B cell (primary cell): ENCODE measurements at regions of chr2 and their contacts with region 1.

Region 1: GRCh38 chr2:224561234-224562005 is 23.7 kb downstream of the CUL3 start:
- DNase-seq: no peak
- ATAC-seq: no peak
- H3K4me3 ChIP-seq: peak overlapping the region in 1 of 5 experiments; percentile 3
- H3K4me3 Mint-ChIP-seq: no peak overlapping the region
- H3K27ac ChIP-seq: peak overlapping the region in 1 of 2 donors; percentile 1
- H3K27ac Mint-ChIP-seq: no peak overlapping the region
- H3K4me1 ChIP-seq: peaks cover 35 to 41% of the 10 kb centered on the region in 2 donors
- H3K4me1 Mint-ChIP-seq: peaks cover 32% of the 10 kb centered on the region
- H3K27me3 ChIP-seq: no peaks in the 10 kb centered on the region
- H3K27me3 Mint-ChIP-seq: no peaks in the 10 kb centered on the region
- CTCF ChIP-seq: no peak

Region 2: DNA sequence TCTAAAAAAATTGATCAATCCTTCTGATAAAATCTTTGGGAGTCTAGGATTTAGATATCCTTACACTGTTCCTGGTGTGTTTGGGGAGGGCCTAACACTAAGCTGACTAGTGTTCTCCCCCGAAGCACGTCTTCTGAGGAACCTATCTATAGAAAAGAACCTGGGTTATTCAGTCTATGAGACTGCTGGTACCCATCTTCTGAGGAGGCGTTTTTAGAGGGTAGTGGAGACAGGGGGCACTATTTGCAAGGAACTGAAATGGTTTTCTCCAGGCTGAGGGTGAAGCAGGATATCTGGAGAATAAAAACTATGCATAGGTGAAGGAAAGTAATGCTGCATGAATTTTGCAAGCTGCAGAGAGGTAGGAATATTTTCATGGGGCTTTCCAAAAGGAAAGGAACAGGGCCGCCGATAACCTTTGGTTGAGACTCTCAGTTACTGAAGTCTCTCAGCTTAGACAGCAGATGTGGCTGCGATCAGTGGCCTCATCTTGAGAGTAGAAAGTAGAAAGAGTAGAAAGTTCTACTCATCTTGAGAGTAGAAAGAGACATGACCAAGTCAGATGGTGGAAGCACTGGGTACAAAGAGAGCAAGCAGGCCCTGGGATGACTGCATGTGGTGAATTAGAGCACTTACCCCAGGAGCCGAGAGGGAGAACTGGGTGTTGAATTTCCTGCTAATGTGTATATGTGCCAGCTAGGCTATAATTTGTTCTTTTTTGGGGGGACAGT is 1541.3 kb before region 1 on chr2:
- CTCF ChIA-PET with region 1: no interaction called
- POLR2A ChIA-PET with region 1: no interaction called
- intact Hi-C with region 1: no loop called
- DNase-seq: no peak
- ATAC-seq: no peak
- H3K4me3 ChIP-seq: no peak overlapping the region
- H3K4me3 Mint-ChIP-seq: no peak overlapping the region
- H3K27ac ChIP-seq: no peak overlapping the region
- H3K27ac Mint-ChIP-seq: no peak overlapping the region
- H3K4me1 ChIP-seq: no peaks in the 10 kb centered on the region
- H3K4me1 Mint-ChIP-seq: no peaks in the 10 kb centered on the region
- H3K27me3 ChIP-seq: no peaks in the 10 kb centered on the region
- H3K27me3 Mint-ChIP-seq: no peaks in the 10 kb centered on the region
- CTCF ChIP-seq: no peak

Region 3: GRCh38 chr2:224545884-224546644 is 15.4 kb before region 1 on chr2:
- CTCF ChIA-PET with region 1: interaction called, 5 read pairs
- POLR2A ChIA-PET with region 1: no interaction called
- intact Hi-C with region 1: loop called (anchors 2 kb)
- DNase-seq: no peak
- ATAC-seq: no peak
- H3K4me3 ChIP-seq: no peak overlapping the region
- H3K4me3 Mint-ChIP-seq: peak overlapping the region; percentile 33
- H3K27ac ChIP-seq: peak overlapping the region in 1 of 2 donors; percentile 50
- H3K27ac Mint-ChIP-seq: peak overlapping the region; percentile 46
- H3K4me1 ChIP-seq: peaks cover 12 to 21% of the 10 kb centered on the region in 2 donors
- H3K4me1 Mint-ChIP-seq: peaks cover 54% of the 10 kb centered on the region
- H3K27me3 ChIP-seq: no peaks in the 10 kb centered on the region
- H3K27me3 Mint-ChIP-seq: no peaks in the 10 kb centered on the region
- CTCF ChIP-seq: no peak

Region 4: GRCh38 chr2:224576088-224576715 is 14.8 kb after region 1 on chr2:
- CTCF ChIA-PET with region 1: no interaction called
- POLR2A ChIA-PET with region 1: interaction called, 3 read pairs
- intact Hi-C with region 1: loop called (anchors 2 kb)
- DNase-seq: peak; percentile 27
- ATAC-seq: peak; percentile 57
- H3K4me3 ChIP-seq: no peak overlapping the region
- H3K4me3 Mint-ChIP-seq: peak overlapping the region; percentile 35
- H3K27ac ChIP-seq: no peak overlapping the region
- H3K27ac Mint-ChIP-seq: peak overlapping the region; percentile 68
- H3K4me1 ChIP-seq: peaks cover 66 to 80% of the 10 kb centered on the region in 2 donors
- H3K4me1 Mint-ChIP-seq: peaks cover 89% of the 10 kb centered on the region
- H3K27me3 ChIP-seq: no peaks in the 10 kb centered on the region
- H3K27me3 Mint-ChIP-seq: no peaks in the 10 kb centered on the region
- CTCF ChIP-seq: no peak